Activated B cell treated with CpG ODN at 0.5 μM for 24 hours (primary cell): ENCODE measurements at regions of chr11 and their contacts with region 1.

Region 1: GRCh38 chr11:2466869-2467698 is 22.3 kb downstream of the KCNQ1 start:
- DNase-seq: no peak
- ATAC-seq: peak; percentile 84
- H3K4me3 Mint-ChIP-seq: peak overlapping the region; percentile 44
- H3K27ac Mint-ChIP-seq: no peak overlapping the region
- H3K4me1 Mint-ChIP-seq: peaks cover 57% of the 10 kb centered on the region
- H3K27me3 Mint-ChIP-seq: no peaks in the 10 kb centered on the region
- CTCF ChIP-seq: no peak

Region 2: DNA sequence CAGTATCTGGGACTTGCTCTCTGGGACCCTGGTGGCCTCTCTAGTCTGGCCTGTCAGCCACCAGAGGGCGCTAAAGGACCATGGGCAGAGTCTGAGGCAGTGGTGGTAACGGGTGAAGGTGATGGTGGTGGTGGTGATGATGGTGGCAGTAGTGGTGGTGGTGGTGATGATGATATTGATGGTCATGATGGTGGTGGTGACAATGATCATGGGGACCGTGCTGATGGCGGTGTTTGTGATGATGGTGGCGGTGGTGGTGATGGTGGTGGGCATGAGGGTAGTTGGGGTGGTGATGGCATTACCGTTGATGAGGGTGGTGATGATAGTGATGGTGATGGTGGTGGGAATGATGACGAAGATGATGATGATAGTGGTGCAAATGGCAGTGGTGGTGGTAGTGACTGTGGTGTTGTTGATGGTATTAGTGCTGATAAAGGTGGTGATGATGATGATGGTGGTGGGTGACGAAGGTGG is 38.7 kb before region 1 on chr11:
- CTCF ChIA-PET with region 1: no interaction called
- POLR2A ChIA-PET with region 1: no interaction called
- intact Hi-C with region 1: loop called (anchors 2 kb)
- DNase-seq: peak; percentile 76
- ATAC-seq: peak; percentile 97
- H3K4me3 Mint-ChIP-seq: no peak overlapping the region
- H3K27ac Mint-ChIP-seq: no peak overlapping the region
- H3K4me1 Mint-ChIP-seq: no peaks in the 10 kb centered on the region
- H3K27me3 Mint-ChIP-seq: no peaks in the 10 kb centered on the region
- CTCF ChIP-seq: peak; percentile 57

Region 3: GRCh38 chr11:2444821-2445745 is 22.0 kb before region 1 on chr11 and contains the start of gene KCNQ1:
- CTCF ChIA-PET with region 1: no interaction called
- POLR2A ChIA-PET with region 1: no interaction called
- intact Hi-C with region 1: loop called (anchors 2 kb)
- DNase-seq: peak; percentile 71
- ATAC-seq: peak; percentile 85
- H3K4me3 Mint-ChIP-seq: peak within 1 kb of the TSS; percentile 85
- H3K27ac Mint-ChIP-seq: peak within 1 kb of the TSS; percentile 65
- H3K4me1 Mint-ChIP-seq: peaks cover 38% of the 10 kb centered on the region
- H3K27me3 Mint-ChIP-seq: no peaks in the 10 kb centered on the region
- CTCF ChIP-seq: no peak
- total RNA-seq, gene KCNQ1: 6.5 and 8.6 TPM in 2 replicates

Region 4: GRCh38 chr11:2498750-2499149 is 31.7 kb after region 1 on chr11:
- CTCF ChIA-PET with region 1: no interaction called
- POLR2A ChIA-PET with region 1: no interaction called
- intact Hi-C with region 1: no loop called
- DNase-seq: no peak
- ATAC-seq: no peak
- H3K4me3 Mint-ChIP-seq: no peak overlapping the region
- H3K27ac Mint-ChIP-seq: no peak overlapping the region
- H3K4me1 Mint-ChIP-seq: peaks cover 3% of the 10 kb centered on the region
- H3K27me3 Mint-ChIP-seq: no peaks in the 10 kb centered on the region
- CTCF ChIP-seq: no peak

Region 5: DNA sequence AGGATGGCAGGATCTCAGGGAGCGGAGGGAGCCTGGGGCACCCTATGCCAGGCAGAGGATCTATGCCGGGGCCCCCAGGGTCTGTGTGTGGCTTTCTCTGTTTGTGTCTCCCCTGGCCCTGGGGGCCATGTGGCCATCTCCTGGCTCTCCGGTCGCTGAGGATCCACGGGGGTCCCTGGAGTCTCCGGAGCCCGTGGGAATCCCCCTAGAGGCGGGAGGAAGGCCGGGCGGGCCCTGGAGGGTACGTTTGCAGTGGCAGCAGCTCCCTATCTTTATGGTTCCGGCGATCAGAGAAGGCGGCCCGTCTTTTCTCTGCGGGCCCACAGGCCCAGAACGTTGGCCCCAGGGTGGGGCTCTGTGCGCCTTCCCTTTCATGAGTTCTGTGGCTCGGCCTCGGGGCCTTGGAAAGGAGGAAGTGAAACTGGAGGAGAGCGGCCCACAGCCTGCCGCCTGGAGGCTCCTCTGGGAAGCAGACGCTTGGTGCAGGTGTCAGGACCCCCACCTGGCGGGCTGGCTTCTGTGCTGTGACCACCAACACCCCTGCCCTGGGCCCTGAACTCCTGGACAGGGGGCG is 59.8 kb after region 1 on chr11:
- CTCF ChIA-PET with region 1: interaction called, 4 read pairs
- POLR2A ChIA-PET with region 1: no interaction called
- intact Hi-C with region 1: loop called (anchors 2 kb)
- DNase-seq: peak; percentile 62
- ATAC-seq: peak; percentile 93
- H3K4me3 Mint-ChIP-seq: peak overlapping the region; percentile 80
- H3K27ac Mint-ChIP-seq: peak overlapping the region; percentile 82
- H3K4me1 Mint-ChIP-seq: peaks cover 42% of the 10 kb centered on the region
- H3K27me3 Mint-ChIP-seq: no peaks in the 10 kb centered on the region
- CTCF ChIP-seq: no peak

Region 6: GRCh38 chr11:2574551-2575535 is 107.8 kb after region 1 on chr11:
- CTCF ChIA-PET with region 1: no interaction called
- POLR2A ChIA-PET with region 1: no interaction called
- intact Hi-C with region 1: no loop called
- DNase-seq: no peak
- ATAC-seq: no peak
- H3K4me3 Mint-ChIP-seq: no peak overlapping the region
- H3K27ac Mint-ChIP-seq: no peak overlapping the region
- H3K4me1 Mint-ChIP-seq: no peaks in the 10 kb centered on the region
- H3K27me3 Mint-ChIP-seq: no peaks in the 10 kb centered on the region
- CTCF ChIP-seq: no peak